Right ventricle myocardium superior (tissue), 1 donor: ENCODE measurements at regions of chr20 and their contacts with region 1.

Region 1: GRCh38 chr20:3818155-3819151 is 1.9 kb upstream of the AP5S1 start:
- DNase-seq: peak; percentile 78
- ATAC-seq: peak; percentile 27

Region 2: DNA sequence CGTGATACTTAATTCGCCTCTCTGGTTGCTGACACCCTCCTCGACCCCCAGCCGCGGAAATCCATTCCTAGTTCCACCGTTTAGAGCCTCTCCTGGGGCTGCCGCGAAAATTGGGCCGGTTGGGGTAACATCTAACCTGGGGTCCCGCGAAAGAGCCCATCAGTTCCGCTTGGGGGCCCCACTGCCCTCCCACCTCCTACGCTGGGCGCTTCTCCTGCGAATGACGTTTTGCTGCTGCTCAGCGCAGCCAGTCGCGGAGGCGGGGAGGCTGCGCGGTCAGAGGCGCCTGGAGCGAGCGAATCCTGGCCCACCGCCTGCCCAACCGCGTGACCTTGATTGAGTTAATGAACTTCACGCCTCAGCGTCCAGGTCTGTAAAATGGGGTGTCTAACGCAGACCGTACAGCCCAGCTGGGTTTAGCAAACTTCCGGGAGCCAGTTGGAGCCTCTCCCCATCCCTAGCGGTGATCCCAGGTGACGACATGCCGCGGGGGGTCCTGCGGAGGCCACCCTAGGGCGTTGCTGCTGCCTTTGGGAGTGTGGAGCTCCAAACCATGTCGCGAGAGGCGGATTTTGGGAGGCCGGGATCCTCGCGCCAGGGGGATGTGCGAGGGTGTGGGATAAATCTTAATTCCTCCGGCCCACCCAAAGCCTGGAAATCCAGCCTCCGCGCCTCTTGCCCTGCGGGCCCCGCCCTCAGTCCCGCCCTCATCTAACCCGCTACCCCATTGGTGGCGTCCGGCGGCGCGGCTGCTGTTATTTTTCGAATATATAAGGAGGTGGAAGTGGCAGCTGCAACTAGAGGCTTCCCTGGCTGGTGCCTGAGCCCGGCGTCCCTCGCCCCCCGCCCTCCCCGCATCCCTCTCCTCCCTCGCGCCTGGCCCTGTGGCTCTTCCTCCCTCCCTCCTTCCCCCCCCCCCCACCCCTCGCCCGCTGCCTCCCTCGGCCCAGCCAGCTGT is 22.7 kb before region 1 on chr20 and contains the start of gene CDC25B:
- intact Hi-C with region 1: loop called (anchors 2 kb)
- DNase-seq: peak; percentile 97
- ATAC-seq: peak; percentile 97
- total RNA-seq, gene CDC25B: 5.7 TPM